Dendritic cell treated with granulocyte-macrophage colony-stimulating factor and Interleukin-4, amounts not matched to agents 40 ng/mL and 50 ng/mL, for 4 days (primary cell): ENCODE measurements at regions of chr14 and their contacts with region 1.

Region 1: DNA sequence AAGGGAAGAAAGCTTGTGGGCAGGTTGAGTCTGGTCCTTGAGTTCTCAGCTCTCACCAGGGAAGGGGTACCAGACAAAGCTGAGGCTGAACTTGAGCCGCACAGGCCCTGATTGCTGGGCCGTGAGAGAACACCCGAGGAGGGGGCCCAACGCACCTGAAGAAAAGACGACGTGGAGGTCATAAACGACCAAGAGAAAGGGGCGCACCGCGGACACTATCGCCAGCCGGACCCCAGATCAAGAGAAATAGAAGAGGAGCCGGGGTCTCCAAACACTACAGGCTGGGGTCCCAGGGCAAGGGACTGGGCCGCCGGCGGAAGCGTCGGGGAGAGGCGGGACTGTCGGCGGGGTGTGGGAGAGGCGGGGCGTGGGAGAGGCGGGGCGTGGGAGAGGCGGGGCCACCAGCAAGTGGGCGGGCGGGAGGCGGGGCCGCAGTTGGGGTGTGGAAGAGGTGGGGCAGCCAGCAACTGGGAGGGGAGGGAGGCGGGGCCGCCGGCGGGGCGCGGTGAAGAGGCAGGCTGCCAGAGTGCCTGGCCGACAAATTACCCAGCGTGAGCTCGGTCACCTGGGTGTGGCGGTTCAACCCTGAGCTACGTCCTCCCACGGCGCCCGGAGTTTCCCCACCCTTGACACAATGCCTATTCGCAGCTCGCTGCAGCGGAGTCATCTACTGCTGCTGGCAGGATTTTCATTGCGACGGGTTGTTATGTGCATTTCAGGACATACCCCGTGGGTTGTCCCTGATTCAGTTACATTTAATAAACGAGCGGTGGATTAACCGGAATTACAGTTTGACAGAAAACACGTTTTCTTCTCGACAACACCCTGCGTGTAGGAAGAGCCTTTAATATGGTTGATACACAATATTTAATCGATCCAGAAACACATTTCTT is 15.5 kb upstream of the NEMF start:
- H3K4me3 Mint-ChIP-seq: peak overlapping the region; percentile 93
- H3K27ac Mint-ChIP-seq: peak overlapping the region; percentile 98
- H3K4me1 Mint-ChIP-seq: peaks cover 29% of the 10 kb centered on the region
- H3K27me3 Mint-ChIP-seq: no peaks in the 10 kb centered on the region

Region 2: GRCh38 chr14:49879683-49880204 is 11.7 kb after region 1 on chr14:
- intact Hi-C with region 1: loop called (anchors 1 kb)
- H3K4me3 Mint-ChIP-seq: no peak overlapping the region
- H3K27ac Mint-ChIP-seq: peak overlapping the region; percentile 97
- H3K4me1 Mint-ChIP-seq: peaks cover 44% of the 10 kb centered on the region
- H3K27me3 Mint-ChIP-seq: peaks cover 3% of the 10 kb centered on the region

Region 3: DNA sequence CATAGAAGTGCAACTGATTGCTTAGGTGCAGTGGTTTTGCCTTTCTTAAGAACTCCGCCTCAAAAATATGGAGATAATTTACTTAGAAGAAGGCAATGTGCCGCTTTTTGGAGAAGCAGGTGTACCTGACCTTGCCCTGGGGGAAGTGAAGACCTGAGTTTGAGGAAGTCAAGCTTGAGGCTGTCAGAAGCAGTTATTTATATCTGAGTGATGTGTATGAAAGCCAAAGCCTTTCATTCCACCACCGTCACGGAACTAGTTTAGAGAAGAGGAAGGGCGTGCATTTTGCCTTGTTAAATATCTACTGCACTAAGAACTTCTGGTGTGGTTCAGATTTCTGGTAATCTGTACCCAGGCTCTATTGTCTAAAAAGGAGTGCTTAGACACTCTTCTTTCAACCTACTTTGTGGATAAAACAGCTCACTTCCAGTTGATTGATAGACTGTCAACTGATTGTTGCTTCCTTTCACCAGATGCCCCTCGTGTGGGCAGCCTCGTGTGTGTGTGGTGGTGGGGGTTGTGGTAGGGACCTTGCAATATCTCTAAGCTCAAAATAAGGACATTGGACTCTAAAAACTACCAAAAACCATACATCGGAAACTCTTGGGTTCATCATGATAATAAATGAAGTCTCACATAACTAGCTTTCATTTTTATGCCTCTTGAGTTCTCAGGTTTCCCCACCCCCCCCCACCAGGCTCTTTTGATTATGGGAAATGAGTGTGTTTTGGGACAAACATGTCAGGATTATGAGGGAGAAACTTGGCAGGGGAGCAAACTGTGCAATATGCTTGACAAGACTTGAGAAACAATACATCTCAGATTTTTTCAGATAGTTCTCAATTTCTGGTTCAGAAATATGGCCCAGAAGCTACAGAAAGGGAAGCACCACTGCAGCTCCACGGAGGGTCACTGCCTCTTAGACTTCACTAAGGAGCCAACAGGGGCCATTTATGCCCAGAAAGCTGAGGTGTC is 103.4 kb after region 1 on chr14:
- intact Hi-C with region 1: loop called (anchors 1 kb)
- H3K4me3 Mint-ChIP-seq: peak overlapping the region; percentile 52
- H3K27ac Mint-ChIP-seq: peak overlapping the region; percentile 96
- H3K4me1 Mint-ChIP-seq: peaks cover 64% of the 10 kb centered on the region
- H3K27me3 Mint-ChIP-seq: no peaks in the 10 kb centered on the region

Region 4: DNA sequence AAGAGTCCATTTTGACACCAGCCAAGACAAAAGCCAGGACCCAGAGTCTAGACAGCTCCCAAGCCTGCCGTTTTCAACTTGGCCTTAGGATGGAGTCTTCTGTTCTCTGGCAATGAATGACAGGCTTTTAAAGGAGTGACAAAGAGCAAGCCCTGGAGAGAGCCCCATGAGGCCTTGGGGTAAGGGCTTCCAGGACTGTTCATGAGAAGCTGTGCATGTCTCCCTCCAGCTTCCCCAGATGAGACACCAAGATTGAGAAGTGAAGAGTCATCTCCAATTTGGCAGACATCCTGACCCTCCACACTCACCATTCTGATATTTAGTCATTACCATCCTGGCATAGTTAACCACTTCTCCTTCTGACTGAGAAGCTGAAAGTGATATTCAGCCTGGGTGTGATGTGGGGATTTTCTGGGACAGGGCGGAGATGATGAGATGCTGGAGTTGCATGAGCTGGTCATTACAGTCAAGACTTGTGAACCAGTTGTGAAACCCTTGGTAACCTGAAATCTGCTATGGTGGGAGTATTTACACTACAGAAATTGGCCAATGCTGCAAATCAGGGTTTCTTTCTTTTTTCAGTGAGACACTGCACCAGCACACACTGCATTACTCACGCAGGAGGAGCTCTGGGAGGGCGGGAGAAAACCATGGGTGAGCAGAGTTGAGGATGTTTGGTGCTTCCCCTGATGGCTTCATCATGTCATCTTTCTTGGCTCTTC is 170.5 kb after region 1 on chr14:
- intact Hi-C with region 1: loop called (anchors 2 kb)
- H3K4me3 Mint-ChIP-seq: peak overlapping the region; percentile 26
- H3K27ac Mint-ChIP-seq: peak overlapping the region; percentile 98
- H3K4me1 Mint-ChIP-seq: peaks cover 68% of the 10 kb centered on the region
- H3K27me3 Mint-ChIP-seq: no peaks in the 10 kb centered on the region

Region 5: GRCh38 chr14:50109342-50109741 is 241.3 kb after region 1 on chr14:
- intact Hi-C with region 1: loop called (anchors 1 kb)
- H3K4me3 Mint-ChIP-seq: no peak overlapping the region
- H3K27ac Mint-ChIP-seq: no peak overlapping the region
- H3K4me1 Mint-ChIP-seq: no peaks in the 10 kb centered on the region
- H3K27me3 Mint-ChIP-seq: no peaks in the 10 kb centered on the region